Activated T-helper 1 cell treated with anti-CD3 and anti-CD28 coated beads, Interleukin-12 subunit alpha, Interleukin-12 subunit beta, Interleukin-2, Interleukin-4 antibody, amounts not matched to agents 30 ng/mL and 10 ng/mL and 1 ng/mL, durations not matched to agents 14 hours and 24 hours and 36 hours (primary cell): ENCODE measurements at regions of chr12 and their contacts with region 1.

Region 1: DNA sequence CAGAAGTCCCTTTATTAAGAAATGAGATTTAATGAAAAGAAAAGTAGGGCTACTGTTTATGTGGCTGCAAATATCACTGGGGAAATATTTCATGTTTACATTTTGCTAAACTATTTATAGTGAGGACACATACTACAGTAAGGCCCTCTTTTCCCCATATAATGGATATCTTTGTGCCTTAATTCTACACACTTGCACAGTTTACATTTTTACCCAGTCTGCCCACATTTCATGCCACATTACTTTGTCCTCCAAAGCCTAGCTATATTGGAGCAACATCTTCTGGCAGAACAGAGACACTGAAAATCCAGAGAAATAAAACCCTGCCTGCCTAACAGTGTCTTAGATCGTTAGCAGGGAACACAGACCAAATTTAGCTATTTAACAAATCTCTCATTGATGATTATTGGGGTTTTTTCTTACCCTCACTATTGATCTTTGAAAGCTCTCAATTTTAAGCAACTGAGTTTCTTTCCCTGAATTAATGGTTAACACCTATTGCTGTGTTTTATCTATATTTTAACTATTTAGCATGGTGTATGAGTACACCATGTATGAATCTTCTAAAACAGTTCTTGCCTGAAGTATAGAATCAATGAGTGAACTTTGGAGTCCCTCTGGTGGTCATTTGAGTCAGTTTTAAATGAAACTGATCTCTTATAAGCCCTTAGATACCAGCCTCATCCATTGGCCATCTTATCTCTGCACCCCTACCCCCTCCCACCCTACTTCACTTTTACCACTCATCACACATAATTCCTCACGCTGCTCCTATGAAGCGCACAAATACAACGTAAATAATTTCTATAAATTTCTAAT is 170.2 kb downstream of the BCAT1 start:
- DNase-seq: no peak
- H3K4me3 Mint-ChIP-seq: no peak overlapping the region
- H3K27ac Mint-ChIP-seq: no peak overlapping the region
- H3K4me1 Mint-ChIP-seq: no peaks in the 10 kb centered on the region
- H3K27me3 Mint-ChIP-seq: peaks cover 6% of the 10 kb centered on the region

Region 2: DNA sequence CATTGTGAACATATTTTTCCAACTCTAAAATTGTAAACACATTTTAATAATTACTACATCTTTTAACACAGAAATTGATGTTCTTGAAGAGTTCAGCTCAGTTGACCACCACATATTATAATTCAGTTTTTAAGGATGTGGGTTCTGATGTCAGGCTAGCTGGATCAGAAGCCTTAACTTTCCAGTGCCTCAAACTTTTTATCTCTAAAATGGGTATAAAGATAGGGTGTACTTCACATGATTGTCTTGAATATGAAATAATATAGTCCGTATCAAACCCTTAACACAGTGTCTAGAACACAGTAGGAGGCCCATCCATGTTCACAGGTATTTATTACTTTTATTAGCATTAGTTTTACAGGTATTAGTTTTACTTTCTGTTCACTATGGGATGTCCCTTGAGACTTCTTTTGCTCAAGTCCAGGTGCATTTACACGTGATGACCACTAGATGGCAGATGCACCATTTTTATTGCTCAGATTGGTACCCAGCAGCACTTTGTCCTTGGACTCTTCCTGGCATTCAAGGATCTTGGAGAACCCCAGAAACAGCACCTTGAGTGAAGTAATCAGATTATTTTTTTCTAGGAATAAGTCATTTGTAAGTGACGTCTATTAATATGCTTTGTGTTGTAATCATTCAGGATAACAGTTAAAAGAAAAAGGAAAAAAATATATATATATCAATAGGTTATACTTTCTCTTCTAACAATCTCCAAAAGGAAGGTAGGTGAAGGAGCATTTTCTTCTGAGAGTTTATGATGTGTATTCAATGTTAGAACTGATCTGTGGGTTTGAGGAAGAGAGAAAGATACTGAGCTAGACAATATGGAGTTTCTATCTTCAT is 1573.5 kb before region 1 on chr12:
- intact Hi-C with region 1: loop called (anchors 2 kb)
- DNase-seq: no peak
- H3K4me3 Mint-ChIP-seq: no peak overlapping the region
- H3K27ac Mint-ChIP-seq: no peak overlapping the region
- H3K4me1 Mint-ChIP-seq: no peaks in the 10 kb centered on the region
- H3K27me3 Mint-ChIP-seq: no peaks in the 10 kb centered on the region

Region 3: DNA sequence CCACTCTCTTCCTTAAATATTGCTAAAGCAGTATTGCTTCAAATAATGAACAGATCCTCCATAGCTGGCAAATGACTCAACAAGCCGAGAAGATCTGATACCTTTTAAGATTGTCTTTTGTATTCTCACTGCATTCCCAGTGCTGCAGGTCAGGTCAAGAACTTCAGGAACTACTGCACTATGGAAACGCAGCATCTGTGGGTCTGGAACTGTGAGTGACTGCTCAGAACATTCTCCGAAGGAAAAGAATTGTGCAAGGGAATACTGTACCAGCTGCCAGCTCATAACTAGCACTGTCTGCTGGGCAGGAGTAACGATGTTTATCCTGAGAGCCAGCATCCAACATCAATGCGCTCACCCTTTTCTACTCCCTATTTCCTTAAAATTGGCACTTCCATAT is 481.2 kb before region 1 on chr12:
- intact Hi-C with region 1: loop called (anchors 10 kb)
- DNase-seq: no peak
- H3K4me3 Mint-ChIP-seq: no peak overlapping the region
- H3K27ac Mint-ChIP-seq: no peak overlapping the region
- H3K4me1 Mint-ChIP-seq: no peaks in the 10 kb centered on the region
- H3K27me3 Mint-ChIP-seq: peaks cover 1% of the 10 kb centered on the region

Region 4: DNA sequence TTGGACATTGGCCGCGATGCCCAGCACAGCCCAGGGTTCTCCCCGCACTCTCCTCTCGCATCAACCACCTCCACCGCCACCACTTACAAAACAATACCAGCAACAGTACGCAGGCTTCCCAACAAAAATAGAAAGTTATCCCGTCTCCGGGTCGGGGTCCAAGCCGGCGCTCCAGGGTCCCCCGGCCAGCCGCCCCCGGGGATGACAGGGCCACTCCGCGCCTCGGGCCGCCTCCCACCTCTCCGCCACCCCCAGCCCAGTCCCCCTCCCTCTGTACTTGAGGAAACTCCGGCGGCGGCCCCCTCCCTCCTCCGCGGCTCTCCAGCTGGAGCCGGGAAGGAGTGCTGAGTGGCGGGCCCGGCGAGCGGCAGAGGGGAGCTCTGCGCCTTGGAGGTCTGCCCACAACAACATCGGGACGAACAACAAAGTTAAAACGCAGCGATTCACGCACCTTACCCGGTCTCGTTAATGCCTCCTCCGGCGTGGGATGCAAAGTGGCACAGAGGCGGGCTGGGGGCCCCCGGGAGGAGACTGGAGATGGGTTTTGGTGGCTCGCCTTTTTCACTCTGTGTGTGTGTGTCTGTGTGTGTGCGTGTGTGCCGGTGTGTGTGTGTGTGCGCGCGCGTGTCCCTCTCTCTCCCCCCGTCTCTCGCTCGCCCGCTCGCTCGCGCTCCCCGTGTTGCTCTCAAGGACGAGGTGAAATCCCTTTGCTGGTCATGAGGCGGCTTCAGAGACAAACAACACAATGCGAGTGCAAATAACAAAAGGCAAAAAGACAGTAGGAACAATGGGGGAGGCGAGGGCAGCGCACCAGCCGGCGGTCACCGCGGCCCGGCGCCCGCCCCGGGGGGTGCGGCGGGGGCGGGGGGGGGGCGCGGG is 216.6 kb before region 1 on chr12:
- intact Hi-C with region 1: loop called (anchors 5 kb)
- DNase-seq: no peak
- H3K4me3 Mint-ChIP-seq: peak overlapping the region; percentile 82
- H3K27ac Mint-ChIP-seq: peak overlapping the region; percentile 56
- H3K4me1 Mint-ChIP-seq: peaks cover 22% of the 10 kb centered on the region
- H3K27me3 Mint-ChIP-seq: peaks cover 64% of the 10 kb centered on the region

Region 5: DNA sequence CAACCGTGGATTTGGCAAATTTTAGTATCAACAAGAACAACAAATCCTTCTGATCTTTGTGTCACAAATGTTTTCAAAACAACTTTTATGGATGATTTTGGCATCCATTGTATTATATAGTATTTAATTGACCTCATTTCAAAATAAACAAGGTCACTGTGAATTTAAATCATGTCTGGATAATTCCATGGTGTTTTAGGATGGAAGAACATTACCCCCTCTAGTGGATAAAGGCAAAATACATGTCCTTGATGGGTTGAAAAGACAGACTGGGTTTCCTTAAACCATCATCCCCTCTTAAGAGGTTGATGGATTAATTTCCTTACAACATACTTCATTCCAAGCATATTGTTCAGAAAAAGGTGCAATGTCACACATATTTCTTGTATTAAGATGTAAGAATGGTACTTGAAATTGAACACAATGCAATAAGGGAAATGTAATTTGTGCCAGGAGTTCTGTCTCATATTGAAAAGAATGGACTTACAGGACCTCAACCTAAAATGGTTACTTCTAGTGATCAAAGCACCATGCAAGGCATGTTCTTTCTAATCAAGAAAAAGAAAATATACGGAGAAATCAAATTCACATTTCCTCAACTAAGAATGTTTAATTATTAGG is 181.8 kb before region 1 on chr12:
- intact Hi-C with region 1: loop called (anchors 5 kb)
- DNase-seq: no peak
- H3K4me3 Mint-ChIP-seq: no peak overlapping the region
- H3K27ac Mint-ChIP-seq: no peak overlapping the region
- H3K4me1 Mint-ChIP-seq: no peaks in the 10 kb centered on the region
- H3K27me3 Mint-ChIP-seq: peaks cover 2% of the 10 kb centered on the region

Region 6: GRCh38 chr12:24754690-24755638 is 23.7 kb before region 1 on chr12:
- intact Hi-C with region 1: no loop called
- DNase-seq: no peak
- H3K4me3 Mint-ChIP-seq: peak overlapping the region; percentile 54
- H3K27ac Mint-ChIP-seq: peak overlapping the region; percentile 85
- H3K4me1 Mint-ChIP-seq: peaks cover 51% of the 10 kb centered on the region
- H3K27me3 Mint-ChIP-seq: no peaks in the 10 kb centered on the region